Mucosa of descending colon (tissue), 3 donors: ENCODE measurements at regions of chr15 and their contacts with region 1.

Region 1: GRCh38 chr15:73081321-73081958 is 29.2 kb downstream of the NEO1 start:
- DNase-seq: peak in 1 of 3 donors; percentile 69
- ATAC-seq: peak; percentile 64
- H3K4me3 ChIP-seq: no peak overlapping the region
- H3K4me1 ChIP-seq: peaks cover 40% of the 10 kb centered on the region
- CTCF ChIP-seq: peak; percentile 53

Region 2: DNA sequence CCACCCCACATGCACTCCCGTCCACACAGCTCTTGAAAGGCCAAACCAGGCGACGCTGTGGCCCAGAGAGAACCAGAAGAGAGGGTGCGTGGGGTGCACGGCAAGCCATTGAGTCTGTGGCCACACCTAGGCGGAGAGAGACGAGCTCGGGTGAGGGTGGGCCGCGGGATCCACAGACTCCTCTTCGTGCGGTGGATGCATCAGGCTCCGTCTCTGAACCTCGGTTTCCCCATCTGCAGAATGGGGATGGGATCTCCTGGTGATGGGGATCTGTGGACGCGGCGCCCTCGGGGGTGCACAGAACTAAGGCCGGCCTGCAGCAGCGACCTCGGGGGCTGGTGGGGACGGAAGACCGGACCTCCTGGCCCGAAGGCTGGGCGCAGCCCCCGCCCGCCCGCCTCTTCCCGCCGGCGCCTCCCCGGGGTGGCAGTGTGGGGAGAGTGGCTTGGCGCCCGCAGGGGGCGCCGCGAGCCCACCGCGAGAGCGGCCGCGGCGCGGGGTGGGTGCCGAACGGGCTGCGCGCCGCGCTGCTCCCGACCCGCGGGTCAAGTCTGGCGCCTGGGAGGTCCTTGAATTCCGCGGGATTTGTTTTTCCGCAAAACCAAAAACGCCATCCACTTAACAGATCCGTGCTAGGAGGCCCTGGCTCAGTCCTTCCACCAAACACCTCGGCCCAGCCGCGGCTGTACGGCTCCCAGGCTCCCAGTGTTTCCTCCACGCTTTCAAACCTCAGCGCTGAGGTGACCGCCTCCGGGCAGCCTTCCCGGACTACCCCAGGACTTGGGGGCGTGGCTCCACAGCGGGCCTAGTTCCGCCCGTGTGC is 284.7 kb before region 1 on chr15:
- intact Hi-C with region 1: loop called (anchors 5 kb)
- DNase-seq: peak; percentile 52 to 71 (median 69)
- ATAC-seq: peak; percentile 94
- H3K4me3 ChIP-seq: no peak overlapping the region
- H3K4me1 ChIP-seq: peaks cover 4% of the 10 kb centered on the region
- CTCF ChIP-seq: peak; percentile 48